Activated CD8-positive, alpha-beta memory T cell treated with anti-CD3 and anti-CD28 coated beads, Interleukin-2, amount 10 ng/mL, durations not matched to agents 7 days and 5 days (primary cell): ENCODE measurements at regions of chr13 and their contacts with region 1.

Region 1: DNA sequence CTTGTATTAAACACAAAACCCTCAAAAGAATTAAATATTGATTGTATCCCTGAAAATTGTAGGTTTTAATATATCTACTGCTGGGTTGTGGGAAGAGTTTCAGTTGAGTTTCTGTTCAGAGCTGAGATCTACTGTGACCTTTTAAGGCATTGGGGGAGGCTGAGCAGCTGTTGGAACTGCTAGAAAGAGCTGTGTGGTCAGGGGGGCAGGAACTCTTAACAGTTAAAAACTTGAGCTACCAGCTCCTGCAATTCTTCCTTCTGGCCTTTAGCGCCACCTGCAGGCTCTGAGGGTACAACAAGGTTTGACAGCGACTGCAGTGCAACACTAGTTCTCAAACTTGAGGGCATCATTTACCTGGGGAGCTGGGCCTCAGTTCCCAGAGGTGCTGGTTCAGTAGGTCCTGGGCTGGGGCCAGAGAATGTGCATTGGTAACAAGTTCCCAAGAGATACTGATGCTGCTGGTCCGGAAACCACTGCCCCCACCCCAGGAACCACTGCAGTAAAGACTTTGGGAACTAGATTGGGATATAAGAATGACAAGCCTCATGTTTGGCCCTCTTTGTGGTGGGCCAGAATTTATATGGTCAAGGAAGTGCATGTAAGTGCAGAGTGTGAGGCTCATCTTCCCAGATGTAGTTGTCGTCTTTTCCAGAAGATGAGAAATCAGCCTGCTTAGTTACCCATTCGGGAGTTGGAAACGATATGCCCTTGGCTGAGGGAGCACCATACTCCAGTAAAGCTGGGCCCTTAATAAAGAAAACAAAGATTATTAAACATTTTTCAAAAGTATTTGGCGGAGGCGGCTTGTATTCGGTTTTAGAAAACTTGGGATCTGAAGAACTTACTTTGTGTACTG is 2.6 kb downstream of the RNASEH2B start:
- DNase-seq: peak; percentile 98
- ATAC-seq: peak; percentile 72
- H3K4me3 Mint-ChIP-seq: peak overlapping the region; percentile 99
- H3K27ac Mint-ChIP-seq: peak overlapping the region; percentile 100
- H3K4me1 Mint-ChIP-seq: peaks cover 66% of the 10 kb centered on the region
- H3K27me3 Mint-ChIP-seq: no peaks in the 10 kb centered on the region

Region 2: DNA sequence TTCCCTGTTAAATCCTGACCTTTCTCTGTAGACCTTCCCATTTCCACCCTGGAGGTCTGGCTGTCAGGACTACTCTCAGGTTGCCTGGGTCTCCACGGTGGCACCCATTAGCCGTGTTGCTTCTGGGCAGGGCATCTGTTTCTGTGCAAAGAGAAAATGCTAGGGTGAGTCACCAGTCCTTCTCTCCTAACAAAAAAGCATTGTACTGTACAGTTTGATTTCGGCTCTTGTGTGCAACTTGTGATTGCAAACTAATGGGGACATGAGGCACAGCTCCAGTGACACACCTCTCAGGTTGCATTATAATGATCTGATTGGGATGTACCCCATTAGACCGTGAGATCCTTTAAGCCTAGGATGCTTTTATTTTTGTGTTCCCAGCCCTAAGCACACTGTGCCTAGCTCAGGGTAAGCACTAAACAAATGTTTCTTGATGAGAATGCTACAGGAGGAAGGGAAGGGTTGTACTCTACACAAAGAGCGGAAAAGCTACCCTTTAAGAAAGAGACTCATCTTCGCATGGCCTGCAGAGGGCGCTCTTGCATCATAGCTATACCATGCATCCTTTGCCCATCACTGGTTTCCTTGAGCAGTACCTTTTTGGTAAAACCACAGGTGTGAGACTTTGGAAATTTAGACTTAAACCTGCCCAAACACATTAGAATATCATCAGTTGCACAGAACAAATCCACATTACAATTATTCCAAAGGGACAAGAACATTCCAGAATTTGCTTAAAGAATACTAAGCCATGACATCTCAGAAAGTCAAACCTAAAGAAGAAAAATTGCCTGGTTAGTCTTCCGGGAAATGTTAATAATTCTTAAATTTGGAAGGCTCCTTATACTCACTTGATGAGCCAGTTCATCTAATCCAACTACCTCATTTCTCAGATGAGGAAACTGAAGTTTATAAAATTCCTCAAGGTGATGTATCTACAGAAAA is 935.6 kb before region 1 on chr13:
- CTCF ChIA-PET with region 1: interaction called, 22 read pairs
- DNase-seq: peak; percentile 78
- ATAC-seq: peak; percentile 77
- H3K4me3 Mint-ChIP-seq: no peak overlapping the region
- H3K27ac Mint-ChIP-seq: no peak overlapping the region
- H3K4me1 Mint-ChIP-seq: peaks cover 2% of the 10 kb centered on the region
- H3K27me3 Mint-ChIP-seq: no peaks in the 10 kb centered on the region

Region 3: DNA sequence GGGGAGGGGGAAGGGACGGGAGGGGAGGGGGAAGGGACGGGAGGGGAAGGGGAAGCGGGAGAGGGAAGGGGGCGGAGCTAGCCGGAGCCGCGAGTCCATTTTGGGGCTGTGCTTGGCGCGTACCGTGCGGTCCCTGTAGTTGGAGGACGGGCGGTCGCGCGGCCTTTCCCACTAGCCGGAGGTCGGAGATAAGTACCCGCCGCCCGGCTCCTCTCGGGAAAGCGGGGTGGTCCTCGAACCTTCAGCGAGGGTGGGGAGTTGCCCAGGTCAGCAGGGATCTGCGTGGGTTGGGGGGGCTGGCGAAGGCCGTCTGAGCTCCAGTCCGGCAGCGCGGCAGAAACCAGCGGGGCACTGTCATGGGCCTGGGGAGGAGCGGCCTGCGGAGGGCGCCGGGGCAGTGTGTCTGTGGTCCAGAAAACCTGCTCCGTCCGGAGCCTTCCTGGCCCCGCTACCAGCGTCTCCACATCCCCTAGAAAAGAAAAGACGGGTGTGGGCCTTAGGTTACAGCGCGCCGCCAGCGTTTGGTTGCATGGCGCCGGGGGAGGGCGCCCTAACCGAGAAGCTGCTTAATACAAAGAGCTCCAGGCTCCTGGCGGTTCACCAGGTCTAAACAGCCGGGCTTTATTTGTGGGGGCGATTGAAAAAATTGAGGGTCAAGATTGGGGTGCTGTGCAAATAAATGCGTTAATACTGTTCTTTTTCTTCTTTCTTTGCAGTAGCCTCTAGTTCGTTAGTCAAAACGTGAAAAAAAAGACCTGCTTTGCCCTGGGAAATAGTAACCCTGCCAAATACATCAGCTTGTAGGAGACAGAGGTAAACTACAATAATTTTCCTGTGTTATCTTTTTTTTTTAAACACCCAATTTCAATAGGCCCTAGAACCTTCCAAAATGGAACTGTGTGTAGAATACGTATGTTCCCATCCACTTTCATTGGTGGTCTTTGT is 914.9 kb before region 1 on chr13 and contains the start of gene TRIM13:
- CTCF ChIA-PET with region 1: interaction called, 13 read pairs
- DNase-seq: peak; percentile 89
- ATAC-seq: peak; percentile 82
- H3K4me3 Mint-ChIP-seq: peak within 1 kb of the TSS; percentile 77
- H3K27ac Mint-ChIP-seq: peak within 1 kb of the TSS; percentile 87
- H3K4me1 Mint-ChIP-seq: peaks cover 30% of the 10 kb centered on the region
- H3K27me3 Mint-ChIP-seq: no peaks in the 10 kb centered on the region
- total RNA-seq, gene TRIM13: 10.3 to 11.8 TPM

Region 4: DNA sequence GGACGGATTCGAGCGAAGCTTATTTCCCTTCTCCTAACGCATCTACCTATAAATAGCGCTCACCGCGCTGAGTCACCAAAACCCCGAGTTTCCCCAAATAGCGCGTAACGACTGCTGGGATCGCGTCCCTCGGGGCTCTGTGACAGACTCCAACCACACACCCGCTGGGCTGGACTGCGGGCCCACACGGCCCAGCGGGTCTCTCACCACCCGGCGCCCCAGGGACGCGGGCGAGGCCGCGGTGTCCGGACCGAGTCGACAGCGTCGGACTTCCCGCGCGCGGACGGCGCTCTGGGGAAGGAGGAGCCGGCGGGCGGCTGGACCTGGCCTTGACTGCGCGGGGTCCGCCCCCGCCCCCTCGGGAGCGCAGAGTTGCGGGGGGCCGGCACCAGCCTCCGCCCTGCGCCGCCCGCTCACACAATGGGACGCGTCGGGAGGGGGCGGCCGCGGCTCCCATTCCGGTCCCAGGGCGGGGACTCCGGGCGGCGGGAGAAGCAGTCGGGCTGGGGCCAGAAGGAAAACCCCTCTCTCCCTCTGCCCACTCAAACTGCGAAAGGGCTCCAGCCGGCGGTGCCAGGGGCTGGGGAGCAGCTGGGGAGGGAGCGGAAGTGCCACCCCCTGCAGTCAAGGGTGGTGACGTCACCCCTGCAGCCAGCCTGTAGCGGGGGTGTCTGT is 788.2 kb before region 1 on chr13:
- CTCF ChIA-PET with region 1: interaction called, 13 read pairs
- DNase-seq: peak; percentile 80
- ATAC-seq: peak; percentile 79
- H3K4me3 Mint-ChIP-seq: peak overlapping the region; percentile 79
- H3K27ac Mint-ChIP-seq: peak overlapping the region; percentile 82
- H3K4me1 Mint-ChIP-seq: peaks cover 46% of the 10 kb centered on the region
- H3K27me3 Mint-ChIP-seq: peaks cover 20% of the 10 kb centered on the region

Region 5: DNA sequence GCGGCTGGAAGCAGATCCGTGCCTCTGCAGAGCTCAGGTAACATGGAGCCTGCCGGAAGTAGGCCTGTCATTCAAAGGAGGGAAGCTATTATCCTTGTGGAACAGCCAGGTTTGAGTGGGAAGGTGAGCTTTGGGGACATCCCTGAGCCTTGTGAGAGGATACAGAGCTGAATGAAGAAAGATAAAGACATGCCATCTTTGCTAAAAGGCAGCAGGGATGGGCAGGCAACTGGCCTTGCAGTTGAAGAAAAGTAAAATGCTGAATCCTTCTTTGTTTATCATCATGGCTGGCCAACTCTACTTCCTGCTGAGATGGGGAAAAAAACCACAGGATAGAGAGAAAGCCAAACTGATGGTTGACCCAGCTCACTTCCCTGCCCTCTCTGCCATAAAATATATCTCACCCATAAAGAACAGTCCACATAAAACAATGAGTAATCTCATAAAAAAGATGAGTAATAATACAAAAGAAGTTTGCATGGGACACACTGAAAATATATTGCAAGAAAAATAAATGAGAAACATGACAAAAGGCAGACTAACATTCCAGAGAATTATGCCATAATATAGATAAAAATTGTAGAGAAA is 294.9 kb before region 1 on chr13:
- CTCF ChIA-PET with region 1: no interaction called
- DNase-seq: no peak
- ATAC-seq: no peak
- H3K4me3 Mint-ChIP-seq: no peak overlapping the region
- H3K27ac Mint-ChIP-seq: no peak overlapping the region
- H3K4me1 Mint-ChIP-seq: peaks cover 13% of the 10 kb centered on the region
- H3K27me3 Mint-ChIP-seq: peaks cover under 1% of the 10 kb centered on the region

Region 6: DNA sequence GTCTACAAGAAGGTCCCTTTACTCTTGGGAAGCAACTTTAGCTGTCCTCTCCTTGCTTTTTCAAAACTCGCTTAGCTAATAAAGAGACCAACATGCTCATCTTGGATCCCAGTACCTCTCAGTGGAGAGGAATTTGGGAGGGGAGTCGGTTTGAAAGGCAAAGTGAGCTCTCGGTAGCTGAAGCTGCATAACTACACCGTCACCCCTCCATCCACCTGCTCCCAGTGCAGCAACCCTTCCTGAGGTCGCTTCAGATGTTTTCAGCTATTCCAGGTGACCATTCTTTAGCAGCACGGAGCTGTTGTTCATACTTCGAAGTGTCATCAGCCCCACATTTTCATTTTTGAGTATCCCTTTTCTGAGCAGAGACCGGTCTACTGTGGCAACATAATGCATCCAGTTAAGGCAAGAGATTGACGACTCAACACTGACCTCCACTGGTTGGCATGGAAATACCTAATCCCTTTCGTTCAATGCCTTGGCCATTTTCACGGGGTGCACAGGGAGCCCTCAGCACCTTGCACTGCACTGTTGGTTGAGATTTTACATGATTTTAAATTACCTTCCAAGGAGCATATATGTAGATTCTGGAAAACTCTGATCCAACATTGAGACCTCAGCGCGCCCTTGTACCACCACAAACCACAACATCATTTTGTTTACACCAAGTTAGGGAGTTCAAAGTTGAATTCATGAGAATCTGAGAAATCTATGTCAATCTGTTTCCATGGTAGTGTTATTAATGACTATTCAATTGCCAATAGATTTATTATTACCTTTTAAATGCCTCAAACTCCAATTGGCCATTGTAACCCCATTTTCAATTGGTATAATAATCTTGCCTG is 110.9 kb before region 1 on chr13:
- CTCF ChIA-PET with region 1: interaction called, 33 read pairs
- DNase-seq: peak; percentile 80
- ATAC-seq: peak; percentile 99
- H3K4me3 Mint-ChIP-seq: no peak overlapping the region
- H3K27ac Mint-ChIP-seq: peak overlapping the region; percentile 3
- H3K4me1 Mint-ChIP-seq: peaks cover 27% of the 10 kb centered on the region
- H3K27me3 Mint-ChIP-seq: peaks cover 4% of the 10 kb centered on the region

Region 7: DNA sequence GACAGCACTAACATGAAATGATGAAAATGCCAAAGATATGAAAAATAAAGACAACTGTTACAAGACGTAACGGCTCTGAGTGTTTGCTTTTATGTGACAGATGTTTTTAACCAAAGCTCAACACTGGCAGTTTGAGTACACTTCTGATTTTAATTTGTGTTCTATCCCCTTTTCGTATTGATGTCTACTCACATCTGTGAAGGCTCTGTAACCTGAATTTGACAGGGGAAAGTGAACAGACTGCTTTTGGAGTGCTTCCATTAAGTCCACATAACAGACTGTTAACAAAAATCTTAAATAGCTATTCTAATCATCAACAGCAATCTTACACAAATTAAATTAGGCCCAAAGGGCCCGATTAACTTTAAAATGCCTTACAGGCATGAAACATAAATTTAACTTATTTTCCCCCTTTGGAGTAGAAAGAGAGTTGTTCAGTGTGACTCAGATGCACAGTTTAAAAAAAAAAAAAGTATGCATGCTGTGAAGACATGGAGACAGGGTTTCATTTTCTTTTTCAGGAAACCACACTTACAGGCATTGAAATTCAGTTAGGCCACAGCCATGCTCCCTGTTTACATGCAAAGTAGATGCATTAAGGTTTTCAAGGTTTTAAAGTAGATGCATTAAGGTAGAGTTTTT is 18.8 kb before region 1 on chr13:
- CTCF ChIA-PET with region 1: interaction called, 135 read pairs
- DNase-seq: peak; percentile 69
- ATAC-seq: peak; percentile 97
- H3K4me3 Mint-ChIP-seq: peak overlapping the region; percentile 67
- H3K27ac Mint-ChIP-seq: peak overlapping the region; percentile 99
- H3K4me1 Mint-ChIP-seq: peaks cover 48% of the 10 kb centered on the region
- H3K27me3 Mint-ChIP-seq: no peaks in the 10 kb centered on the region

Region 8: GRCh38 chr13:51070005-51070649 is 158.0 kb after region 1 on chr13:
- CTCF ChIA-PET with region 1: interaction called, 13 read pairs
- DNase-seq: peak; percentile 87
- ATAC-seq: peak; percentile 91
- H3K4me3 Mint-ChIP-seq: no peak overlapping the region
- H3K27ac Mint-ChIP-seq: peak overlapping the region; percentile 74
- H3K4me1 Mint-ChIP-seq: peaks cover 49% of the 10 kb centered on the region
- H3K27me3 Mint-ChIP-seq: peaks cover 8% of the 10 kb centered on the region